GM13976 (cell line): ENCODE measurements at regions of chr4 and their contacts with region 1.

Region 1: GRCh38 chr4:158856852-158857251 is 88.0 kb downstream of the FNIP2 start:
- DNase-seq: peak; percentile 63
- CTCF ChIP-seq: no peak

Region 2: GRCh38 chr4:158314756-158315487 is 541.9 kb before region 1 on chr4:
- in situ Hi-C with region 1: no loop called
- DNase-seq: no peak
- CTCF ChIP-seq: no peak

Region 3: GRCh38 chr4:158652920-158653319 is 203.9 kb before region 1 on chr4:
- in situ Hi-C with region 1: no loop called
- DNase-seq: no peak
- CTCF ChIP-seq: no peak

Region 4: DNA sequence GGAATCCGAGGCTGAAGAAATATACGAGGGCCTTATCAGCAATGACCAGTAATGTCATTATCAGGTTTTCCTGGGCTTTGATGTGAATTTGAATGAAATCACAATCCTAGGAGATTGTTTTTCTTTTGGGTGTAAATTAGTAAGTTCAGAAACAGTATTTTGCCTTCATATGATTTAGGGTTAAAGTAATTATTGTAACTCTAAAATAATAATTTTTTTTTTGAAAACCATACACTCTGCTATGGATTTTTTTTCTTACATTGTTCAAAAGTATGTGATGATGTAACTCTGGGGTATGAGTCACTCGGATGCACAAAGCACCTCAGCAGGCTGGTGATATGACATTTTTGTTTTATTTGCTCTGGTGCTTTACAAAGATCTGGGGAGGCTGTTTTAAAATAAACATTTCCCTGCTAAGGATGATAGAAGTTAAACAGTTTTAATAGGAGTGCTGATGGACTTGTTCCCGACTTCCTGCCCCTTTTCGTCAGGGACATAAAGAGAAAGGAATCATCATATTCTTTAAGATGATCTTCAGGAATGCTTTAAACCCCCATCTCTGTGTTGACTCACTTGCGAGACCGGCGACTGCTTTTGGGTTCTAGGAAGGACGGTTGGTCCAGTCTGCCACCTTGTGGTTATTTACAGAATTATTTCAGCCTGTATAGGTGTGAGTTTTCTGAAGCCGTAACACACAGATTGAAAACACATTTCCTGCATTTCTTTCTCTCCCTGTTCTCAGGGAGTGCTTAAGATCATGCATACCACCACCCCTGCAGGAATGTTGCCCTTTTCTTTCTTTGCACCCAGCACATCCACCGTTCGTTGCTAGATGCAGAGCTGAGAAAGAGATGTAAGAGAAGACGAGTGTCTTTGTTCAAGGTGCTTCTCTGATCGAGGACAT is 318.5 kb after region 1 on chr4:
- in situ Hi-C with region 1: loop called (anchors 5 kb)
- DNase-seq: no peak
- CTCF ChIP-seq: peak; percentile 53

Region 5: GRCh38 chr4:159206427-159206871 is 349.6 kb after region 1 on chr4:
- in situ Hi-C with region 1: loop called (anchors 10 kb)
- DNase-seq: peak; percentile 48
- CTCF ChIP-seq: no peak